Activated CD4-positive, alpha-beta T cell treated with anti-CD3 and anti-CD28 coated beads, Interleukin-2, amount 10 ng/mL, durations not matched to agents 24 days and 14 days (primary cell): ENCODE measurements at regions of chr17 and their contacts with region 1.

Region 1: DNA sequence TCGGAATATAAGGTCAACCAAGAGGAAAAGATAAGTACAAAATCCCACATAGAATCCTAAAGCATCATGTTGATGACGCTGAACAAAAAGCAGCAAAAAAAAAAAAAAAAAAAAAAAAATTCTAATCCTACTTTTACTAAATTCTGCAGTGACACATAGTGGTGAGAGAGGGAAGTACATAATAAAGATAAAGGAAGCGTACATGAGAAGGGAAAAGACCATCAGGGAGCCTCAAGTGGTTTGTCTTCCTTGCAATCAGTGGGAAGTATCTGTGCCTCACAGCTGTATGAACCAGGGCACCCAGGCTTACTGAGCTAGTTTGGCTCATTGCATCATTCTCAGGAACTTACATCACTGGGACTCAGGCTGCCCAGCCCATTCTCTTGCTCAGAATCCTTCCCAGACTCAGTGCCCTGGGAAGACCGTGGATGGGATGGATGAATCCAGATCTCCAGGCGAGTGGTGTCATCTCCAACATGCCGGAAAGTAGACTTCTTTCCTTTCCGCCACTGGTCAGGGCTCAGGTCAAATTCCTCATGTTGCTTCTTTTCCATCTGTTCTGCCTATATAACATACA is 21.2 kb downstream of the SMG6 start:
- DNase-seq: peak; percentile 76
- H3K4me3 Mint-ChIP-seq: no peak overlapping the region
- H3K27ac Mint-ChIP-seq: peak overlapping the region; percentile 76
- H3K4me1 Mint-ChIP-seq: peaks cover 36% of the 10 kb centered on the region
- H3K27me3 Mint-ChIP-seq: no peaks in the 10 kb centered on the region

Region 2: GRCh38 chr17:1908699-1909309 is 373.6 kb before region 1 on chr17:
- intact Hi-C with region 1: loop called (anchors 10 kb)
- DNase-seq: peak; percentile 83
- H3K4me3 Mint-ChIP-seq: peak overlapping the region; percentile 69
- H3K27ac Mint-ChIP-seq: no peak overlapping the region
- H3K4me1 Mint-ChIP-seq: peaks cover 6% of the 10 kb centered on the region
- H3K27me3 Mint-ChIP-seq: peaks cover 68% of the 10 kb centered on the region

Region 3: GRCh38 chr17:2323629-2324314 is 41.4 kb after region 1 on chr17:
- intact Hi-C with region 1: no loop called
- DNase-seq: no peak
- H3K4me3 Mint-ChIP-seq: no peak overlapping the region
- H3K27ac Mint-ChIP-seq: no peak overlapping the region
- H3K4me1 Mint-ChIP-seq: peaks cover 2% of the 10 kb centered on the region
- H3K27me3 Mint-ChIP-seq: no peaks in the 10 kb centered on the region

Region 4: DNA sequence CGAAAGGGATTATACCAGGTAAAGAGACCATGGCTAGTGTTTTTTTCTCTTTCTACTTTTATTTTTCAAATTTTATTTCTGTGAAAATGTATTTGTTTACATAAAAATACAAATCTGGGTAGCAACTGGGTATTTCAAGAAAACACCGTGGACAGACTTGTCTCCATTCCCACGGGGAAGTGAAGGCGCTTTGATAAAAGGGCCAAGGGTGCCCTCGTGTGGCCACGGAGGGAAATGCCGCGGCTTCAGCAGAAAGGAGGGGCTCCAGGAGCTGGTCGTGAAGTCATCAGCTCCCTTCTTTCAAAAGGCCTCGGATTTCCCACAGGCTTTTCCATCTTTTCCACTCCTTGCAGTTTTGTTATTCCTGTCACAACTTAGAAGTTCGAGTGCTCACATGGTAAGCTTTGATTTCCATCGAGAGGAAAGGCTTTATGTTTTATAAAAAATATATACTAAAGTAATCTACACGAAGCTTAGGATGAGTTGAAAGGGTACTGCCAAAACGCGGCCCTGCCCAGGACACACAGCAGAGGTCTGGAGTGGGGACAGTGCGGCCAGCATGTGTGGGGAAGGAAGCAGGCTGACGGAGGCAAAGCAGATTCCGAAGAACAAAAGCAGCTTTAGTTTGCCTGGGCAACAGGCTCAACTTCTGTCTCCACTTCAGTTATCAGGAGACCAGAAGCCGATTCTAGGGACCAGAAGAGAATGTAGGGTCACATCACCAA is 133.8 kb after region 1 on chr17:
- intact Hi-C with region 1: no loop called
- DNase-seq: peak; percentile 96
- H3K4me3 Mint-ChIP-seq: no peak overlapping the region
- H3K27ac Mint-ChIP-seq: no peak overlapping the region
- H3K4me1 Mint-ChIP-seq: peaks cover 3% of the 10 kb centered on the region
- H3K27me3 Mint-ChIP-seq: no peaks in the 10 kb centered on the region